Left ventricle myocardium superior (tissue), 1 donor: ENCODE measurements at regions of chr2 and their contacts with region 1.

Region 1: DNA sequence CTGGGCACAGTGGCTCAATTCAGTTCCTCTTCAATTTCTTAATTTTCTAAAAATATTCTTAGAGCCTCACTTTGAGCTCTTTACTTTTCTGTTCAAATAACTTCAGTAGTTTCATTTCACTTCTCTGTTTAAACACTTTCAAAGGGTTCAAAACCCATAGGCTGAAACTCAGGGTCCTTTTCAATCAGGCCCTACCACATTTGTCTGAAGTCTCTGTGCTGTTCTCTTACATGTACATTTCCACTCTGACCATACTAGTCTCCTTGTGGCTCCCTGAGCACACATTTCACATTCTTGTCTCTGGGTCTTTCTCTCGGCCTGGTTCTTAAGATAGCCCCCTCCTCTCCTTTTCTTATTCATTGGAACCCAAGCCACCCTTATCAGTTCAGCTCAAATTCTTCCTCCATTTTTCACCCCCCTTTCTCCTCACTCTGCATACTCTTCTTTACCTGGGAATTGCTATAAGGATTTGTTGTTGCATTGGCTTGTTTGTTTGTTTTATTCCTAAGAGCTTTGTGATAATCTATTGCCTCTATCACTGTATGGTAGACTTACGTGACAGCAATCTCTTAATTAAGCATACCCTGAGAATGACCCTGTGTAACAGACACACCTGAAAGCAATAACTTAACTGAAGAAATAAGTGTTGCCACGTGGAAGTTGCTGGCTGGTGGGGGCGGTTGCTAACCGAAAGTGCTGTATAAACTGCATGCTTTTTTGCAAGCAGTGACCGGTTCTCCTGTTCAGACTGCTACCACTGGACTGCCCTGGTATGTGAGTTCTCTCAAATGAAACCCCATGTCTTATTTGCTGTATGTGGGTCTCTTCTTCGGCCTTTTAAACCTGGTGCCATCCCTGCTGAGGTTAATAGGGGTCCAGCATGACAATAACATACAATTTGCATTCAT is 27.7 kb upstream of the ACADL start:
- DNase-seq: no peak
- ATAC-seq: no peak

Region 2: DNA sequence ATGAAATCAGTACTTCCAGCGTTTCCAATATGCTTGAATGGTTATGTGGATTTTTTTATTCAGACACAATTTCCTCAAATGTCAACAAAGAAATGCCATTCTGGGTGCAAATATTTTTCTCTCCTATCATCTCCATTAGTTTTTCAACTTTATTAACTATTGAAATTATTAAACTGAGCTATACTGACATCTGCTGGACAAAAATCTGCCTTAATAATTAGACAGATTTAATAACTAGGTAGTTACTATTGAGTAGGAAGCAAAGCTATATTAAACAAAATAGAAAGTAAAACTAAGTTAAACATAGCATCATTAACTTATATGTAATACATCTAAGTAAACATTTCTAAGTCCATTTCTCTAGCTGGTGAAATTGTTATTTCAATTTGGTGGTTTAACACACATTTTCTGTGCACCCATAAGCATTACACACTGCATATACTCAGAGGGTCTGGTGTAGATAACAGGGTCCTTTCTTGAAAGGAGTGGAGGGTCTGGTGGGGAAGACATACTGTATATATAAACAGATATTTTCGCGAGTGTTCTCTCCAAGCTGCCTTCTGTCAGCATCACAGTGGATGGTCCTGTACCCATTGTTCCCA is 146.6 kb after region 1 on chr2:
- intact Hi-C with region 1: loop called (anchors 5 kb)
- DNase-seq: no peak
- ATAC-seq: no peak